B cell (primary cell): ENCODE measurements at regions of chr22 and their contacts with region 1.

Region 1: GRCh38 chr22:41237707-41238569 is 2.8 kb downstream of the CHADL start:
- DNase-seq: peak; percentile 90
- ATAC-seq: peak; percentile 97
- H3K4me3 ChIP-seq: peak overlapping the region in 4 of 5 experiments; percentile 14 to 57 (median 41)
- H3K4me3 Mint-ChIP-seq: peak overlapping the region; percentile 84
- H3K27ac ChIP-seq: no peak overlapping the region
- H3K27ac Mint-ChIP-seq: no peak overlapping the region
- H3K4me1 ChIP-seq: peaks cover 5 to 10% of the 10 kb centered on the region in 2 donors
- H3K4me1 Mint-ChIP-seq: peaks cover 7% of the 10 kb centered on the region
- H3K27me3 ChIP-seq: no peaks in the 10 kb centered on the region
- H3K27me3 Mint-ChIP-seq: no peaks in the 10 kb centered on the region
- CTCF ChIP-seq: peak; percentile 77

Region 2: DNA sequence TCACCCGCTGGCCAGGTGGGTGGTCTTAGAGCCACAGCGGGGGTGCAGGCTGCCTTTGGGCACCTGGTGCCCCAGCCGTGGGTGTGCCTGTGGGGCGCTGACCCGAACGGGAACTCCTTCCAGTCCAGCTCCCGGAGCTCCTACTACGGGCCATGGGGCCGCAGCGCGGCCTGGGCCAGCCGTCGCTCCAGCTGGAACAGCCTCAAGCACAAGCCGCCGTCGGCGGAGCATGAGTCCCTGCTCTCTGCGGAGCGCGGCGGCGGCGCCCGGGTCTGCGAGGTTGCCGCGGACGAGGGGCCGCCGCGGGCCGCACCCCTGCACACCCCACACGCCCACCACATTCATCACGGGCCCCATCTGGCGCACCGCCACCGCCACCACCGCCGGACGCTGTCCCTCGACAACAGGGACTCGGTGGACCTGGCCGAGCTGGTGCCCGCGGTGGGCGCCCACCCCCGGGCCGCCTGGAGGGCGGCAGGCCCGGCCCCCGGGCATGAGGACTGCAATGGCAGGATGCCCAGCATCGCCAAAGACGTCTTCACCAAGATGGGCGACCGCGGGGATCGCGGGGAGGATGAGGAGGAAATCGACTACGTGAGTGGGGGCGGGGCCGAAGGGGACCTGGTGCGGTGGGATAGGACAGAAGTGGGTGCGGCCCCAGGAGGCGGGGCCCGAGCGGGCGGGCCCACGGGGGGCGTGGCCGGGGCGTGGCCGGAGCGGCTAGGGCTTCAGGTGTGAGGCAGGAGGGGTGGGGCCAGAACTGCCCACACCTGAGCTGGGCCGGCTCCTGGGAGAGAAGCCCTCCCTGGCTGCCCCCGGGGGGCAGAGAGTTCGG is 1575.9 kb before region 1 on chr22:
- CTCF ChIA-PET with region 1: no interaction called
- POLR2A ChIA-PET with region 1: no interaction called
- intact Hi-C with region 1: no loop called
- DNase-seq: peak; percentile 68
- ATAC-seq: peak; percentile 52
- H3K4me3 ChIP-seq: peak overlapping the region in 3 of 5 experiments; percentile 41 to 50 (median 46)
- H3K4me3 Mint-ChIP-seq: peak overlapping the region; percentile 80
- H3K27ac ChIP-seq: no peak overlapping the region
- H3K27ac Mint-ChIP-seq: peak overlapping the region; percentile 53
- H3K4me1 ChIP-seq: peaks cover 25 to 29% of the 10 kb centered on the region in 2 donors
- H3K4me1 Mint-ChIP-seq: peaks cover 24% of the 10 kb centered on the region
- H3K27me3 ChIP-seq: peaks cover 0 to 69% (median 23%) of the 10 kb centered on the region in 4 experiments
- H3K27me3 Mint-ChIP-seq: peaks cover 66% of the 10 kb centered on the region
- CTCF ChIP-seq: no peak

Region 3: GRCh38 chr22:41197038-41197972 is 40.6 kb before region 1 on chr22:
- CTCF ChIA-PET with region 1: interaction called, 10 read pairs
- POLR2A ChIA-PET with region 1: interaction called, 3 read pairs
- intact Hi-C with region 1: loop called (anchors 5 kb)
- DNase-seq: peak; percentile 88
- ATAC-seq: peak; percentile 92
- H3K4me3 ChIP-seq: peak overlapping the region; percentile 73 to 85 (median 76)
- H3K4me3 Mint-ChIP-seq: peak overlapping the region; percentile 89
- H3K27ac ChIP-seq: no peak overlapping the region
- H3K27ac Mint-ChIP-seq: peak overlapping the region; percentile 2
- H3K4me1 ChIP-seq: peaks cover 7 to 17% of the 10 kb centered on the region in 2 donors
- H3K4me1 Mint-ChIP-seq: peaks cover 18% of the 10 kb centered on the region
- H3K27me3 ChIP-seq: peaks cover 0 to 7% (median 3%) of the 10 kb centered on the region in 4 experiments
- H3K27me3 Mint-ChIP-seq: peaks cover 3% of the 10 kb centered on the region
- CTCF ChIP-seq: peak; percentile 5

Region 4: DNA sequence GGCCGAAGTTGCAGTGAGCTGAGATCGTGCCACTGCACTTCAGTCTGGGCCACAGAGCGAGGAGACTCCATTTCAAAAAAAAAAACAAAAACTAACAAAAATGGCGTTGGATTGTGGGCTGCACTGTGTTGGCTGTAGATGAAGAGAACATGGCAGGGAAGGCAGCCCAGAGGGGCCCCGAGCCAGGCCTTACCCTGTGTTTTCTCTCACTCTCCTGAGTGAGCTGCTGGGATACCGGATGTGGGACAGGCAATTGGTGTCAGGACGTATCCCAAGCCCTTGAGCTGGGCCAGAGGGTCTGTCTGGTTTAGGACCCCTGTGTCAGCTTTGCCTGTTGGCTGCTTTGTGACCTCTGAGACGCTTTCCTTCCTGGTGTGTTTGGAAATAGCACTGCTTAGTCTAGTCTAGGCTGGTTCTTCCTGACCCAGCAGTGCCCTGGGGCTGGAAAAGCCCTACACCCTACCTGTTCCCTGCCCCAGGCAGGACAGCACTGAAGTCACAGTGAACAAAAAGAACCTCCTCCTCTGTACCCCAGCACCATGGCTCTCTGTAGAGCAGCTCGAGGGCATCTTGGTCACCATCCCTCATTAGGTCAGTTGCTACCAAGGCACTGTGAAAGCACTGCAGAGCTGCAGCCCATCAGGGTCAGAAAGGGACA is 15.0 kb before region 1 on chr22:
- CTCF ChIA-PET with region 1: interaction called, 10 read pairs
- POLR2A ChIA-PET with region 1: no interaction called
- intact Hi-C with region 1: no loop called
- DNase-seq: no peak
- ATAC-seq: no peak
- H3K4me3 ChIP-seq: no peak overlapping the region
- H3K4me3 Mint-ChIP-seq: no peak overlapping the region
- H3K27ac ChIP-seq: no peak overlapping the region
- H3K27ac Mint-ChIP-seq: no peak overlapping the region
- H3K4me1 ChIP-seq: peaks cover 0 to 1% of the 10 kb centered on the region in 2 donors
- H3K4me1 Mint-ChIP-seq: peaks cover 2% of the 10 kb centered on the region
- H3K27me3 ChIP-seq: no peaks in the 10 kb centered on the region
- H3K27me3 Mint-ChIP-seq: no peaks in the 10 kb centered on the region
- CTCF ChIP-seq: no peak

Region 5: GRCh38 chr22:41491374-41492100 is 253.6 kb after region 1 on chr22:
- CTCF ChIA-PET with region 1: no interaction called
- POLR2A ChIA-PET with region 1: no interaction called
- intact Hi-C with region 1: no loop called
- DNase-seq: no peak
- ATAC-seq: no peak
- H3K4me3 ChIP-seq: no peak overlapping the region
- H3K4me3 Mint-ChIP-seq: no peak overlapping the region
- H3K27ac ChIP-seq: no peak overlapping the region
- H3K27ac Mint-ChIP-seq: peak overlapping the region; percentile 48
- H3K4me1 ChIP-seq: peaks cover 7 to 18% of the 10 kb centered on the region in 2 donors
- H3K4me1 Mint-ChIP-seq: peaks cover 44% of the 10 kb centered on the region
- H3K27me3 ChIP-seq: no peaks in the 10 kb centered on the region
- H3K27me3 Mint-ChIP-seq: no peaks in the 10 kb centered on the region
- CTCF ChIP-seq: no peak

Region 6: DNA sequence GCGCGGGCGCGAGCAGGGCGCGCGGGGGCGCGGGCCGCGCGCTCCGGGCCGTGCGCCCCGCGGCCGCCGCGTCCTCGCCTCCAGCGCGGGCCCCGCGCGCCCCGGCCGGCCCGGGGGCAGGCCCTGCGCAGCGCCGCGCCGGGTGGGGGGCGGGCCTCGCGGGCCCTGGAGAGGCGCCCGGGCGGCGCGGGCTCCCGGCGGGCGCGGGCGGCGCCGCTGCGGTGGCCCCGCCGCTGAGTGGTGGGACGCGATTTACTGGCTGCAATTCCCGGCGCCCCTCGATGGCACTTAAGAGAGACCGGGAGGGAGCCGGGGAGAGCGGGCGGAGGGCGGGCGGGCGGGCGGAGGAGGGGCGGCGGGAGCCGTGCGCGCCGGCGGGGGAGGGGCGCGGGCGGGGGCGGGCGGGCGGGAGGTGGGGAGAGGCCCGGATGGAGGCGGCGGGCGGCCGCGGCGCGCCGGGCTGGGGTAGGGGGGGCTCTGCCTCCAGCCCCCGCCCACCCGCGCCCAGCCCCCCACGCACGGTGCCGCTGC is 1105.7 kb after region 1 on chr22:
- CTCF ChIA-PET with region 1: no interaction called
- POLR2A ChIA-PET with region 1: no interaction called
- intact Hi-C with region 1: no loop called
- DNase-seq: no peak
- ATAC-seq: peak; percentile 57
- H3K4me3 ChIP-seq: no peak overlapping the region
- H3K4me3 Mint-ChIP-seq: no peak overlapping the region
- H3K27ac ChIP-seq: no peak overlapping the region
- H3K27ac Mint-ChIP-seq: no peak overlapping the region
- H3K4me1 ChIP-seq: peaks cover 4 to 12% of the 10 kb centered on the region in 2 donors
- H3K4me1 Mint-ChIP-seq: peaks cover 10% of the 10 kb centered on the region
- H3K27me3 ChIP-seq: peaks cover 0 to 59% (median 28%) of the 10 kb centered on the region in 4 experiments
- H3K27me3 Mint-ChIP-seq: peaks cover 39% of the 10 kb centered on the region
- CTCF ChIP-seq: no peak